CD4-positive, alpha-beta T cell (primary cell): ENCODE measurements at regions of chr19 and their contacts with region 1.

Region 1: DNA sequence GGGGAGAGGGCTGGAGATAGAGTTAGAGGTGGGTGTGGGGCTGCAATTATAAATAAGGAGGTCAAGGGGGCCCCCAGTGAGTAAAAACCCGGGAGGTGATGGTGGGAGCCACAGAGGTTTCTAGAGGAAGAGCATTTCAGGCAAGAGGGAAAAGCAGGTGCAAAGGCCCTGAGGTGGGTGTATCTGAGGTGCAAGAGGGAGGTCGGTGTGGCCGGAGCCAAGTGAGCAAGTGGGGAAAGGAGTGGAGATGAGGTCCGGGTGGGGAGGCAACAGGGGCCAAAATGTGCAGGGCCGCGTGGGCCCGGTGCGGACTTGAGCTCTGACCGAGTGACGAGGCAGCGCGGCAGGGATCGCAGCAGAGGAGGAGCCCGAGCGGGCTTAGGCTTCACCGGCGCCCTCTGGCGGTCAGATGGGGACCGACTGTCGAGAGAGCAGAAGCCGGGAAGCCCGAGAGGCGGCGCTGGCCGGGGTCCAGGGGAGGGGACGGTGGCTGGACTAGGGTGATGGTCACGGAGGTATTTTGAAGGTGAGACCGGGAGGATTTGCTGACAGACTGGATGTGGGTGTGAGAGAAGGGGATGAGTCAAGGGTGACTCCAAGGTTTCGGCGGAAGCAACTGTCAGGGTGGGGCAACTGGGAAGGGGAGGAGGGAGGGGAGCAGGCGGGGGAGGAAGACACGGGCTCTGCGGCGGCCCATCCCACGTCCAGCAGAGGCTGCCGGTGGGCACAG is 17.7 kb upstream of the SPACA4 start:
- DNase-seq: peak; percentile 79 to 93 (median 86)
- ATAC-seq: peak; percentile 91
- H3K4me3 ChIP-seq: peak overlapping the region; percentile 54
- H3K4me3 Mint-ChIP-seq: peak overlapping the region; percentile 78
- H3K27ac ChIP-seq: peak overlapping the region in 1 of 2 donors; percentile 29
- H3K27ac Mint-ChIP-seq: peak overlapping the region; percentile 12
- H3K4me1 ChIP-seq: peaks cover 24% of the 10 kb centered on the region
- H3K4me1 Mint-ChIP-seq: peaks cover 15% of the 10 kb centered on the region
- H3K27me3 ChIP-seq: no peaks in the 10 kb centered on the region
- H3K27me3 Mint-ChIP-seq: peaks cover 5% of the 10 kb centered on the region
- CTCF ChIP-seq: peak; percentile 93

Region 2: DNA sequence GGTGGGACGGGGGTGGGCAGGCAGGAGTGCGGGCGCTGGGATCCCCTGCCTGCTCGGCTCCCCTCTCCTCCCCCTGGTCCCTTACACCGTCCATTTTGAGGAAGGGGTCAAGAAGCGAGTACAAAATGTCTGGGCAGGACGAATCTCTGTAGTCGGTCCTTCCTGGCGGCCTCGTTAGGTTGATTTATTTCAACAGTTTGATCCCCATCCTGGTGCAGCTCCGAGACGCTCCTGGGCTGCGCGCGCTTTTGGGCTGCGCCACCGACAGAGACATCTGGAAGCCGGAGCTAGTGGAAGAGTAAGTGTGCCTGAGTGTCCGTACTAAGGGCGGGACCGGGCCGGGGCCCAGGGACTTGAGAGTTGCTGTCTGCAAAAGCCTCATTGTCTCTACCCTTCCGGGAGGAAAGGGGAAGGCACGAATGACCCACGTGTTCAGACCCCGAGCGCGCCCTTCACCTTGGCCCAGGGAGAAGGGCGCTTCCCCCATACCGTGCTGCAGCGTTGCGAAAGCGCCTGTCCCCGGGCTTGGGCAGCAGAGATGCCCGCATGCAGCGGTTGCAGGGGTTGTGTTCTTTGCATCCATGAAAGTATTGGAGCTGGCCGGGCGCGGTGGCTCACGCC is 317.2 kb before region 1 on chr19:
- CTCF ChIA-PET with region 1: no interaction called
- POLR2A ChIA-PET with region 1: no interaction called
- intact Hi-C with region 1: loop called (anchors 2 to 10 kb)
- DNase-seq: peak in 3 of 14 experiments; percentile 19 to 26 (median 23)
- ATAC-seq: no peak
- H3K4me3 ChIP-seq: peak overlapping the region; percentile 55
- H3K4me3 Mint-ChIP-seq: peak overlapping the region; percentile 63
- H3K27ac ChIP-seq: no peak overlapping the region
- H3K27ac Mint-ChIP-seq: no peak overlapping the region
- H3K4me1 ChIP-seq: peaks cover 18% of the 10 kb centered on the region
- H3K4me1 Mint-ChIP-seq: peaks cover 20% of the 10 kb centered on the region
- H3K27me3 ChIP-seq: peaks cover 0 to 14% of the 10 kb centered on the region in 2 experiments
- H3K27me3 Mint-ChIP-seq: peaks cover 31% of the 10 kb centered on the region
- CTCF ChIP-seq: no peak

Region 3: DNA sequence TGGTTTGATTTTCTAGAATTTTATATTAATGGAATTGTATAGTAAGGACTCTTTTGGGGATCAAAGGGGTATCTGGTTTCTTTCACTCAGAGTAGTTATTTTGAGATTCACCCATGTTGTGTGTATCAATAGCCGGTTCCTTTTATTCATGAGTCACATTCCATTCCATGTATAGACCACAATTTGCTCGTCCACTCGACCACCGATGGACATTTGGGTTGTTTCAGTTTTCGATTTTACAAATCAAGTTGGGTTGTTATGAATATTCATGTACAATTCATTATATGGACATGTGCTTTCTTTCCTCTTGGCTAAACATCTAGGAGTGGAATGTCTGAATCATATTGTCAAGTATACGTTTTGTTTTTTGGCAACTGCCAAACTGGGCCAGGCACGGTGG is 273.1 kb before region 1 on chr19:
- CTCF ChIA-PET with region 1: no interaction called
- POLR2A ChIA-PET with region 1: no interaction called
- intact Hi-C with region 1: loop called (anchors 2 to 10 kb)
- DNase-seq: no peak
- ATAC-seq: no peak
- H3K4me3 ChIP-seq: no peak overlapping the region
- H3K4me3 Mint-ChIP-seq: no peak overlapping the region
- H3K27ac ChIP-seq: no peak overlapping the region
- H3K27ac Mint-ChIP-seq: no peak overlapping the region
- H3K4me1 ChIP-seq: peaks cover 10% of the 10 kb centered on the region
- H3K4me1 Mint-ChIP-seq: peaks cover 9% of the 10 kb centered on the region
- H3K27me3 ChIP-seq: no peaks in the 10 kb centered on the region
- H3K27me3 Mint-ChIP-seq: no peaks in the 10 kb centered on the region
- CTCF ChIP-seq: no peak

Region 4: GRCh38 chr19:48492925-48493717 is 95.7 kb before region 1 on chr19:
- CTCF ChIA-PET with region 1: interaction called, 26 read pairs
- POLR2A ChIA-PET with region 1: no interaction called
- intact Hi-C with region 1: loop called (anchors 1 kb)
- DNase-seq: peak; percentile 61 to 92 (median 78)
- ATAC-seq: peak; percentile 76
- H3K4me3 ChIP-seq: peak overlapping the region; percentile 50
- H3K4me3 Mint-ChIP-seq: peak overlapping the region; percentile 83
- H3K27ac ChIP-seq: no peak overlapping the region
- H3K27ac Mint-ChIP-seq: peak overlapping the region; percentile 52
- H3K4me1 ChIP-seq: peaks cover 60% of the 10 kb centered on the region
- H3K4me1 Mint-ChIP-seq: peaks cover 49% of the 10 kb centered on the region
- H3K27me3 ChIP-seq: peaks cover 0 to 40% of the 10 kb centered on the region in 2 experiments
- H3K27me3 Mint-ChIP-seq: peaks cover 53% of the 10 kb centered on the region
- CTCF ChIP-seq: no peak

Region 5: GRCh38 chr19:48573163-48573505 is 15.7 kb before region 1 on chr19:
- CTCF ChIA-PET with region 1: no interaction called
- POLR2A ChIA-PET with region 1: no interaction called
- intact Hi-C with region 1: no loop called
- DNase-seq: no peak
- ATAC-seq: no peak
- H3K4me3 ChIP-seq: no peak overlapping the region
- H3K4me3 Mint-ChIP-seq: no peak overlapping the region
- H3K27ac ChIP-seq: no peak overlapping the region
- H3K27ac Mint-ChIP-seq: no peak overlapping the region
- H3K4me1 ChIP-seq: peaks cover 4% of the 10 kb centered on the region
- H3K4me1 Mint-ChIP-seq: no peaks in the 10 kb centered on the region
- H3K27me3 ChIP-seq: no peaks in the 10 kb centered on the region
- H3K27me3 Mint-ChIP-seq: peaks cover 5% of the 10 kb centered on the region
- CTCF ChIP-seq: no peak

Region 6: DNA sequence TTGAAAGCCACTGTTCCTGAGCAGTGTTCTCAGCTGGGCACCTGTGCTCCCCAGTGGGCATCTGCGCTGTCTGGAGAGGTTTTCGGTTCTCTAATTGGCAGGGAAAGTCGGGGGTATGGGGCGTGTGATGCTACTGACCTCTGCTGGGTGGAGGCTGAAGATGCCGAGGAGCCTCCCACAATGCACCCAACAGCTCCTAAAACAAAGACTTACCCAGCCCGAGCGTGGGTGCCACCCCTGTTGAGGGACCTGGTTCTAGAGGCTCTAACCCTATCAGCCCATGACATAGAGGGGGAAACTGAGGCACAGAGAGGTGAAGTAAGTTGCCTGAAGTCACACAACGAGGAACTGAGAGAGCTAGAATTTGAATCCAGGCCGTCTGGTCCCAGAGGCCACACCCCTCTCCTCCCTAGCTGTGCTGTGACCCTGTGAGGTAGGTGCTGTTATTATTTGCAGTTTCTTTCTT is 20.0 kb after region 1 on chr19:
- CTCF ChIA-PET with region 1: interaction called, 18 read pairs
- POLR2A ChIA-PET with region 1: interaction called, 5 read pairs
- intact Hi-C with region 1: loop called (anchors 1 to 2 kb)
- DNase-seq: peak in 13 of 14 experiments; percentile 35 to 82 (median 54)
- ATAC-seq: peak; percentile 93
- H3K4me3 ChIP-seq: no peak overlapping the region
- H3K4me3 Mint-ChIP-seq: no peak overlapping the region
- H3K27ac ChIP-seq: no peak overlapping the region
- H3K27ac Mint-ChIP-seq: no peak overlapping the region
- H3K4me1 ChIP-seq: peaks cover 6% of the 10 kb centered on the region
- H3K4me1 Mint-ChIP-seq: peaks cover 6% of the 10 kb centered on the region
- H3K27me3 ChIP-seq: no peaks in the 10 kb centered on the region
- H3K27me3 Mint-ChIP-seq: no peaks in the 10 kb centered on the region
- CTCF ChIP-seq: peak; percentile 69

Region 7: GRCh38 chr19:48698046-48698445 is 109.2 kb after region 1 on chr19:
- CTCF ChIA-PET with region 1: no interaction called
- POLR2A ChIA-PET with region 1: no interaction called
- intact Hi-C with region 1: no loop called
- DNase-seq: no peak
- ATAC-seq: no peak
- H3K4me3 ChIP-seq: no peak overlapping the region
- H3K4me3 Mint-ChIP-seq: no peak overlapping the region
- H3K27ac ChIP-seq: no peak overlapping the region
- H3K27ac Mint-ChIP-seq: no peak overlapping the region
- H3K4me1 ChIP-seq: peaks cover 10% of the 10 kb centered on the region
- H3K4me1 Mint-ChIP-seq: peaks cover 9% of the 10 kb centered on the region
- H3K27me3 ChIP-seq: peaks cover 12 to 18% of the 10 kb centered on the region in 2 experiments
- H3K27me3 Mint-ChIP-seq: peaks cover 16% of the 10 kb centered on the region
- CTCF ChIP-seq: no peak

Region 8: GRCh38 chr19:48720613-48721296 is 131.9 kb after region 1 on chr19:
- CTCF ChIA-PET with region 1: no interaction called
- POLR2A ChIA-PET with region 1: no interaction called
- intact Hi-C with region 1: no loop called
- DNase-seq: peak; percentile 81 to 96 (median 86)
- ATAC-seq: peak; percentile 79
- H3K4me3 ChIP-seq: peak overlapping the region; percentile 84
- H3K4me3 Mint-ChIP-seq: peak overlapping the region; percentile 92
- H3K27ac ChIP-seq: peak overlapping the region; percentile 81 to 94
- H3K27ac Mint-ChIP-seq: peak overlapping the region; percentile 96
- H3K4me1 ChIP-seq: peaks cover 32% of the 10 kb centered on the region
- H3K4me1 Mint-ChIP-seq: peaks cover 23% of the 10 kb centered on the region
- H3K27me3 ChIP-seq: no peaks in the 10 kb centered on the region
- H3K27me3 Mint-ChIP-seq: no peaks in the 10 kb centered on the region
- CTCF ChIP-seq: no peak